SK-N-SH (cell line): ENCODE measurements at regions of chr21 and their contacts with region 1.

Region 1: GRCh38 chr21:31198575-31198974 is 145.5 kb downstream of the TIAM1 start:
- DNase-seq: peak; percentile 55
- H3K4me3 ChIP-seq: no peak overlapping the region; a peak in 1 of 4 replicates
- H3K27ac ChIP-seq: no peak overlapping the region
- H3K4me1 ChIP-seq: peaks cover 0 to 7% of the 10 kb centered on the region in 2 experiments; a peak in 2 of 4 replicates
- H3K27me3 ChIP-seq: no peaks in the 10 kb centered on the region
- CTCF ChIP-seq: peak; percentile 83
- EP300 ChIP-seq: no peak
- RAD21 ChIP-seq: peak; percentile 87

Region 2: GRCh38 chr21:31558962-31559367 is 360.4 kb after region 1 on chr21:
- CTCF ChIA-PET with region 1: interaction called, 27 read pairs
- POLR2A ChIA-PET with region 1: no interaction called
- DNase-seq: peak; percentile 97
- H3K4me3 ChIP-seq: peak overlapping the region; percentile 83 to 89
- H3K27ac ChIP-seq: peak overlapping the region in 1 of 2 experiments; percentile 75; a peak in 2 of 4 replicates
- H3K4me1 ChIP-seq: peaks cover 0 to 13% of the 10 kb centered on the region in 2 experiments; a peak in 1 of 4 replicates
- H3K27me3 ChIP-seq: peaks cover 15% of the 10 kb centered on the region
- CTCF ChIP-seq: peak; percentile 25; the same call in 1 of the 2 replicates
- EP300 ChIP-seq: no peak
- RAD21 ChIP-seq: no peak

Region 3: GRCh38 chr21:31604591-31605190 is 406.1 kb after region 1 on chr21:
- CTCF ChIA-PET with region 1: interaction called, 11 read pairs
- POLR2A ChIA-PET with region 1: no interaction called
- DNase-seq: peak; percentile 70
- H3K4me3 ChIP-seq: peak overlapping the region in 1 of 2 experiments; percentile 30; a peak in 1 of 4 replicates
- H3K27ac ChIP-seq: no peak overlapping the region
- H3K4me1 ChIP-seq: no peaks in the 10 kb centered on the region
- H3K27me3 ChIP-seq: no peaks in the 10 kb centered on the region; the same call in 1 of the 2 replicates
- CTCF ChIP-seq: peak; percentile 91
- EP300 ChIP-seq: no peak
- RAD21 ChIP-seq: peak; percentile 94